Tibial artery (tissue), 4 donors: ENCODE measurements at regions of chr12 and their contacts with region 1.

Region 1: DNA sequence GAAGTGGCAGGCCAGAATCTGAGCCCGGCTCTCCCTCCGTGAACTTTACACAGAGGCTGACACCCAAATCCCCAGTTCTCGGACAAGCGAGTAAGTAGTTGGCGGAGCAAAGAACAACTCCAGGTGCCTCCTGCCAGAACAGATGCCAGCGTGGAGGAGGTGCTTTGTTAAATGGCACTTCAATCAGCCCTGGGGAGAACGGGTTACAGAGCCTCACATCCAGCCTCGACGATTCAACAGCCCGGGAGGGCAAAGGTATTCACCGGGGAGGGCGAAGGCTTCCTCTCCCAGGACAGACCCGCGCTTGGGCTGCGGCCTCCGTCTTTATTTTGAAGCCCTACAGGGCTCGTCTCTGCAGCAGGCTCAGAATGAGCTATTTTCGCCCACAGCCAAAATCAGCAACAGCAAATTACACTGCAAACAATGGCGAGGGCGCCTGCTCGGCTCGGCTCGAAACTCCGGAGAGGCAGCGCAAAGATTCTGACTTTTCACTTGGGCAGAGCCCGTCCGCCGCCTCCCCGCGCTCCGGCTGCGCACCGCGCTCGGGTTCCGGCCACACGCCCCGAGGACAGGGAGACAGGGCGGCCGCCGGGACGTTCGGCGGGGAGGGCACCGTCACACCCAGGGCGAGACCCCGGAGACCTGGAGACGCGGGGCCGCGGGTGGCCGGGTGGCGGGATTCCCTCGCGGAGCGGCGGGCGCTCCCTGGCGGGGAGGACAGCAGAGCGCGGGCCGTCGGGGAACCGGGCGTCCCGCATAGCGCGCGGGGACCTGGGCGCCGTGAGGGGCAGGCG is 811 bp downstream of the TMCC3 start:
- DNase-seq: peak; percentile 30 to 72
- H3K4me3 ChIP-seq: peak overlapping the region; percentile 68 to 75
- H3K27ac ChIP-seq: peak overlapping the region; percentile 69 to 74
- H3K4me1 ChIP-seq: peaks cover 0 to 11% (median 3%) of the 10 kb centered on the region in 4 donors
- H3K27me3 ChIP-seq: no peaks in the 10 kb centered on the region
- CTCF ChIP-seq: peak; percentile 22 to 27

Region 2: GRCh38 chr12:94057262-94058151 is 592.0 kb before region 1 on chr12:
- intact Hi-C with region 1: no loop called
- DNase-seq: no peak
- H3K4me3 ChIP-seq: no peak overlapping the region
- H3K27ac ChIP-seq: no peak overlapping the region
- H3K4me1 ChIP-seq: peaks cover 0 to 18% (median 11%) of the 10 kb centered on the region in 4 donors
- H3K27me3 ChIP-seq: no peaks in the 10 kb centered on the region
- CTCF ChIP-seq: no peak

Region 3: DNA sequence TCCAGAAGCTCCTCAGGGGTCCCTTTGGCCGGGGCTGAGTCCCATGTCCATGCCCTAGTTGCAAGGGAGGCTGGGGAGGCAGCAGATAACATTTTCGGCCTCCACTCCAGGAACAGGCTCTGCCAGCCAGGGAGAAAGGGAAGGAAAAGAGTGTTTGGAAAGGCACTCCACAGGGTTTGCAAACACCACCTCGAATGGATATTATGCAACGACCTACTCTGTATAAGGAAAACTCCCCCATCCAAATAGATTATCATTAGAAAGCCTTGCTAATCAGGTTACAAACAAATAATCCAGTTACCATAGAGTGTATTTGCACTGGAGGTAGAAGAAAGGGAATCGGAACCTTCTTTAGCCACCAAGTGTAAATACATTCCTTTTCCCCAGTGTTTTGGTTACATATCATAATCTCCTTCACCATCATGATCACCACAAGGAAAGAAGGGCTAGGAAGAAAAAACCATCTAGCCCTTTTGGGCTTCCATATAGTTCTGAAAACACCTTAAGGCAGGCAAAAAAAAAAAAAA is 39.6 kb before region 1 on chr12:
- intact Hi-C with region 1: no loop called
- DNase-seq: no peak
- H3K4me3 ChIP-seq: no peak overlapping the region
- H3K27ac ChIP-seq: no peak overlapping the region
- H3K4me1 ChIP-seq: peaks cover 0 to 3% (median under 1%) of the 10 kb centered on the region in 4 donors
- H3K27me3 ChIP-seq: no peaks in the 10 kb centered on the region
- CTCF ChIP-seq: no peak

Region 4: DNA sequence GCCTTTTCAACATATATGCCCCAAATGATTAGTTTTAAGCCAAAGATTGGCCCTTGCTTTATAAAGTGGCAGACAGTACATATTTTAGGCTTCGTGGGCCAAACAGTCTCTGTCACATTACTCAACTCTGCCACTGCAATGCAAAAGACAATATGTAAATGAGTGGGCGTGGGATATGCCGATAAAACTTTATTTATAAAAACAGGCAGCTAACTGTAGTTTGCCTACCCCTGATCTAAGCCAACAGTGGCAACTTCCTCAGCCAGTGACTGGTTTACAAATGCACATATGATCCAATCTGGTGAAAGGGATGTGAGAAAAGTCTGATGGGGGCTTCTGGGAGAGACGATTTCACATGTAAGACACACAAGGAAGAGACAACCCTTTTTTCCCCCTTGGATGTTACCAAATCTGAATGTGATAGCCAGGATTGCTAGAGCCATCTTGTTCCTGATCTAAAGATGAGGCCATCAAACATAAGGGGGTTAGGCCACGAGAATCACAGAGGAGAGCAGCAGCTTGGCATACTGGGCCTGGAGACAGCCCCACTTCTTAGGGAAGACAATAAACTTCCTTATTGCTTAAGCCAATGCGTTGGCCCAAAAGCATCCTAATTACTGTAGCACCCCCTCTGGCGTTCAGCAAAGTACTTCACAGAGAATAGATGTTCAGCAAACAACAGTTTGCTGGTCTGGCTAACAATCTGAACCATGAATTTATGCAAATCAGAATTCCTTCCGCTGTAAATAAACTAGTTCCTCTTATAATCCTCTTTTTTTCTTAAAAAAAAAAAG is 76.0 kb after region 1 on chr12:
- intact Hi-C with region 1: loop called (anchors 10 kb)
- DNase-seq: peak in 1 of 2 donors; percentile 51
- H3K4me3 ChIP-seq: no peak overlapping the region
- H3K27ac ChIP-seq: no peak overlapping the region
- H3K4me1 ChIP-seq: peaks cover 0 to 7% (median 0%) of the 10 kb centered on the region in 4 donors
- H3K27me3 ChIP-seq: no peaks in the 10 kb centered on the region
- CTCF ChIP-seq: peak; percentile 17 to 39